Activated CD8-positive, alpha-beta memory T cell treated with anti-CD3 and anti-CD28 coated beads, Interleukin-2, amount 10 ng/mL, durations not matched to agents 7 days and 5 days (primary cell): ENCODE measurements at regions of chr1 and their contacts with region 1.

Region 1: DNA sequence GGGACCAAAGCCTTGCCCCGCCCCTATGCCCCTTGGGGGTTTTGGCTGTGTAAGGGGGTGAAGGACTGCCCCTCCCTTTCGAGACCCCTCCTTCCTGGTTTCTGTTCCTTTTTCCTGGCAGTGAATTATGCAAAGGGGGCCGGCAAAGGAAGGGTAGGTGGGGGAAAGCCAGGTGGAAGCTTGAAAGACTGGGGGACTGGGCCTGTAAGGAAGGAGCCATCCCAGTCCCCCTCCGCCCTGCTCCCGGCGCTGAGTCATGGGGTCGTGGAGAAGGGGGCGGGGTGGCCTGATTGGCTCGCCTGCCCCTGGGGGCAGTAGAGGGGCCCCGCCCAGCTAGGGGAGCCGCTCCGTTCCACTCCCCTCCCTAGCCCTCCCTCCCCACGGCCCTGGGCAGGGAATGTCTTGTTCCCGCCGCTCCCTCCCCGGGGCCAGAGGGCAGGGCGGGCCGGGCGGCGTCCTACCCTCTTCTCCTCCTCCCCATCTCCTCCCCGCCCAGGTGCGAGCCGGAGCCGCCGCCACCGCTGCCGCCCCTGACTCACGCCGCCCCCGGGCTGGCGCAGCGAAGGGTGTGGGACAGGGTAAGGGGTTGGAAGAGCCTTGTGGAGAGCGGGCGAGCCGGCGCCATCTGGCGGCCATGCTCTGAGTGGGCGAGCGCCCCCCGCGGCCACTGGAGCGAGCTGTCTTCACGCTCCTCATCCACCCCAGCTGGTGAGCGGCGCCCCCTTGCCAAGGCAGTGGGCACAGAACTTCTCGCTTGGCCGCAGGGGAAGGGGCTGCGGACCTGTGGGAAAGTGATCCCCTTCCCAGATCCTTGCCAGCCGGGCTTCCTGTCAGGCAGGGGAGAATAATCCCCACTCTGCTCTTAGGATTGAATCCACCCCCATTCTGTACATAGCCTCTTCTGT is 14.7 kb downstream of the ZBTB7B start:
- DNase-seq: peak; percentile 89
- ATAC-seq: peak; percentile 99
- H3K4me3 Mint-ChIP-seq: peak overlapping the region; percentile 47
- H3K27ac Mint-ChIP-seq: peak overlapping the region; percentile 44
- H3K4me1 Mint-ChIP-seq: peaks cover 42% of the 10 kb centered on the region
- H3K27me3 Mint-ChIP-seq: no peaks in the 10 kb centered on the region

Region 2: GRCh38 chr1:154695985-154696384 is 321.3 kb before region 1 on chr1:
- CTCF ChIA-PET with region 1: no interaction called
- DNase-seq: no peak
- ATAC-seq: no peak
- H3K4me3 Mint-ChIP-seq: no peak overlapping the region
- H3K27ac Mint-ChIP-seq: no peak overlapping the region
- H3K4me1 Mint-ChIP-seq: no peaks in the 10 kb centered on the region
- H3K27me3 Mint-ChIP-seq: peaks cover 35% of the 10 kb centered on the region

Region 3: GRCh38 chr1:154896771-154897391 is 120.4 kb before region 1 on chr1:
- CTCF ChIA-PET with region 1: no interaction called
- DNase-seq: no peak
- ATAC-seq: peak; percentile 33
- H3K4me3 Mint-ChIP-seq: no peak overlapping the region
- H3K27ac Mint-ChIP-seq: no peak overlapping the region
- H3K4me1 Mint-ChIP-seq: no peaks in the 10 kb centered on the region
- H3K27me3 Mint-ChIP-seq: peaks cover 6% of the 10 kb centered on the region

Region 4: GRCh38 chr1:154955718-154956543 is 61.4 kb before region 1 on chr1 and contains the start of gene PBXIP1:
- CTCF ChIA-PET with region 1: interaction called, 41 read pairs
- DNase-seq: peak; percentile 92
- ATAC-seq: peak; percentile 62
- H3K4me3 Mint-ChIP-seq: peak within 1 kb of the TSS; percentile 95
- H3K27ac Mint-ChIP-seq: peak within 1 kb of the TSS; percentile 98
- H3K4me1 Mint-ChIP-seq: peaks cover 78% of the 10 kb centered on the region
- H3K27me3 Mint-ChIP-seq: no peaks in the 10 kb centered on the region
- total RNA-seq, gene PBXIP1: 52.6 to 61.5 TPM

Region 5: DNA sequence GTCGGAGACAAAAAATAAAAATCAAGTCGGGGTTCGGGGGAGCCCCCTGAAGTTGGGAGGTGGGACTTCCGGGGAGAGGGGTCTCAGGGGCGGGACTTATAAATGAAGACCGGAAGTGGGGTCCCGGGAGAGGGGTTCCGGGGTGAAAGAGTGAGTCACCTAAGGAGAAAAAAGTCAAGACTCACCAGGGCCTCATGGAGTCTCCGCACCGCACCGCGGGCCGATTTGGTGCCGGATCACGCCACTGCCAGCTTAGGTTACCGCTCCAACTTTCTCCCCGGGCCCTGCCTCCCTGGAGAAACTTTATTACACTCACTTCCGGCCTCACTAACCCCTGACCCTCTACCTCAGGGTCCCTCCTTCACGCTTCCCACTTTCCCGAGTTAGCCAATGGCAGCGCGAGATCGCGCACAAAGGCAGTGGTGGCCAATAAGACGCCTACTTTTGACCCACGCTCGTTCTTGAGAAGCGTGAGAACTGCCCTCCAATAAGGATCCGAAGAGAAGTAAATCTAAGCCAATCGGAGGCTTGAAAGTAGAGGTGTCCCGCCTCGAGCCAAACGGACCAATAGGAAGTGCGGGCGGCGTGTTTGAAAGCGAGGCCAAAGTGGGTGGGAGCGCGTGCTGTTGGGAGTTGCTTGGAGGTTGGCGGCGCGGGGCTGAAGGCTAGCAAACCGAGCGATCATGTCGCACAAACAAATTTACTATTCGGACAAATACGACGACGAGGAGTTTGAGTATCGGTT is 43.1 kb before region 1 on chr1 and contains the start of gene CKS1B:
- CTCF ChIA-PET with region 1: interaction called, 28 read pairs
- DNase-seq: peak; percentile 98
- ATAC-seq: peak; percentile 89
- H3K4me3 Mint-ChIP-seq: no peak within 1 kb of the TSS
- H3K27ac Mint-ChIP-seq: no peak within 1 kb of the TSS
- H3K4me1 Mint-ChIP-seq: peaks cover 38% of the 10 kb centered on the region
- H3K27me3 Mint-ChIP-seq: no peaks in the 10 kb centered on the region
- total RNA-seq, gene CKS1B: 149 to 155 TPM

Region 6: DNA sequence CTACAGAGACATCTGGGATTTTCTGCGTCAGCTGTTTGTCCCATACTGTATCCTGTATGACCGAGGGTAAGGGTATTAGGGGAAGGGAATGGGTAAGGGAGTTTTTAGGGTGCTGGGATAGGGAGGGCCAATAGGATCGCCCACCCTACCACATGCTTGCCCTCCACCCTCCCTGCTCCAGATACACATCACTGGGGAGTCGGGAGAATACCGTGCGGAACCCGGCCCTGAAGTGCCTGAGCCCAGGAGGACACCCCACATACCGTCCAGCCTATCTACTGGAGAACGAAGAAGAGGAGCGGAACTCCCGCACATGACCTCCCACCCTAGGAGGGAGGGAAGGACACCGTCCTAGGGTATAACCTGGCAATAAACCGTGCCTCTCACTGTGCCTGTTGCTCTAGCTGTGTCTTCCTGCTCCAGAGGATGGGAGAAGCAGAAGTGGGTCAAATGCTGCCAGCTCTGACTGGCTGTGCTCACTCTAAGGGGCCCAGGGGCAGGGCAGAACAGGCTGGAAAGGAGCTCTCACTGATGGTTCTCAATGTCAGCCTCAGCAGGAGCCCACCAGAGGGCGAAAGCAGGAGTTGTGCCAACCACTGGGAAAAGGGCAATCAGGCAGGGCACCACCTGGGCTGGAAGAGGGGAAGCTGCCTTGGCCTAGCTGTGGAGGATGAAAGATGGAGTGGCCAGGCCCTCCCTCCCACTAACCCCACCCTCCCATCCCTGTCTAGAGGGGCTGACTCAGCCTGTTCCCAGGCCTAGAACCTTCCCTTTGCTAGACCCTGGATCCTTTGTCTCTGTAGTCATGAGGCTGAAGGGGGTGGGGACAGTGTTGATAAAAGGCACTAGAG is 24.3 kb before region 1 on chr1:
- CTCF ChIA-PET with region 1: interaction called, 212 read pairs
- DNase-seq: no peak
- ATAC-seq: no peak
- H3K4me3 Mint-ChIP-seq: no peak overlapping the region
- H3K27ac Mint-ChIP-seq: no peak overlapping the region
- H3K4me1 Mint-ChIP-seq: peaks cover 18% of the 10 kb centered on the region
- H3K27me3 Mint-ChIP-seq: no peaks in the 10 kb centered on the region

Region 7: GRCh38 chr1:155032886-155033285 is 15.6 kb after region 1 on chr1:
- CTCF ChIA-PET with region 1: interaction called, 13 read pairs
- DNase-seq: no peak
- ATAC-seq: no peak
- H3K4me3 Mint-ChIP-seq: no peak overlapping the region
- H3K27ac Mint-ChIP-seq: no peak overlapping the region
- H3K4me1 Mint-ChIP-seq: no peaks in the 10 kb centered on the region
- H3K27me3 Mint-ChIP-seq: peaks cover 21% of the 10 kb centered on the region

Region 8: GRCh38 chr1:155050560-155051341 is 33.5 kb after region 1 on chr1 and contains the start of gene ADAM15:
- CTCF ChIA-PET with region 1: interaction called, 328 read pairs
- DNase-seq: peak; percentile 83
- ATAC-seq: peak; percentile 90
- H3K4me3 Mint-ChIP-seq: peak within 1 kb of the TSS; percentile 79
- H3K27ac Mint-ChIP-seq: peak within 1 kb of the TSS; percentile 78
- H3K4me1 Mint-ChIP-seq: peaks cover 28% of the 10 kb centered on the region
- H3K27me3 Mint-ChIP-seq: no peaks in the 10 kb centered on the region
- total RNA-seq, gene ADAM15: 41.7 to 47.5 TPM

Region 9: DNA sequence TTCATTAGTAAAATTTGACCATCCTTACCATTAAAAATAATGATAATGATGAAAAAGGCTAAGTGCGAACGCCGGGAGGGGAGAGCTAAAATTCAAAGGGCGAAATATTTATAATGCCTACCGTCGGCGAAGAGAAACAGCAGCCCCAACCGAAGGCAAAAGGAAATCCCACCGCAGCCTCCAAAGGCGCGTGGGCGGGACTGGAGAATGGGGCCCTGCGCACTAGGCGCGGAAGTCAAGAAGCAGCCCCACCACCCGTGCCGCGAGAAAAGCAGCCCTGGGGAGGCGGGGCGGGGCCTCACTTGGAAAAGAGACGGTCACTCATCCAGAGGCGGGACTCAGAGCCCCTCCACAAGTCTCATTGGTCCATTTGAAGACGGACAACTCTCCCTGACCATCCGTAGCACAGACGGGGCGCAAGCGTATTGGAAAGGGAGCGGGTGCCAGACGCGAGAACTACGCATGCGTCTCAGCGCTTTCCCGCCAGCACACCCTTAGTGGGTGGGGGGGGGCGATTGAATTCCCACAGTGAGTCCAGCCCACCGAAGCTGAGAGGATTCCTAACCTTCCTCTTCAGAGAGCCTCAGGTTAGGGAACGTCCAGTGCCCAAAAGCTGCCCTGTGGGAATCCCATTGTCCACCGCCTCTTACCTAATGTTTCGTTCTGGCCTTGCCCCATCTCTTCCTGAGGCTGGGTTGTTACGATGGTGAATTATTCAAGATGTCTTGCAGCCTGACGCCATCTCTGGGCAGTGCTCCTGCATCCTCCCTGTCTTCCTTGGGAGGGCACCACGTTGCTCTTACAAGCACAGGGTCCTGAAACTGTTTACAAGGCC is 210.2 kb after region 1 on chr1:
- CTCF ChIA-PET with region 1: no interaction called
- DNase-seq: peak; percentile 100
- ATAC-seq: peak; percentile 97
- H3K4me3 Mint-ChIP-seq: peak overlapping the region; percentile 98
- H3K27ac Mint-ChIP-seq: peak overlapping the region; percentile 98
- H3K4me1 Mint-ChIP-seq: peaks cover 41% of the 10 kb centered on the region
- H3K27me3 Mint-ChIP-seq: no peaks in the 10 kb centered on the region